ENCODE measurements at regions of chr15 and their contacts with region 1.

Region 1: DNA sequence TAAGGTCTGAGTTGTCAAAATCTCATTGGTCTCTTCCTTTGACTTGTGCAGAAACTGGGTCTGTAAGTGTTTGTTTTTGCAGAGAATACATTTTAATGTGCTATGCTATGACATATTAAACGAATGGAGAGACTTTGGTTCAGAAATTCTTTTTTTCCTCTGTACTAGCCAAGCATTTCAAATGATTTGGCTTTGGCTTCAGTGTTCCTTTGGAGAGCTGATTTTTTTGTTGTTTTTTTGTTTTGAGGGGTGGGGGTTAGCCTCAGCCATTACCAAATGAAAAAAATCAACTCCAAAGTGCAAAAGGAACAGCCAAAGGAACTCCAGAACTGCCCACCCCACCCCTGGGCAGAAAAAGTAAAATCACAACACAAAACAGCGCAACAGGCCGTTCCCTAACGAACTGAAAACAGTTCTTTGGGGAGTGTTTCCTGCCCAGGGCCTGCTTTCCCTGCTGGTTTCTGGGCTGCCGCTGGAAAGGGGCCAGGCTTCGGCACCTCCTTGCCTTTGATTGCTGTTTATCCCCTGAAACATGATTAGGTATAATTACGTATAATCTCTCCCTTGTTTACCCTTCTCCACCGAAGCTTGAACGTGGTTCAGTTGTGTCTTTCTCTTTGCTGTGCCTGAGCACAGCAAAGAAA is 57.6 kb upstream of the NEO1 start:
- DNase-seq: peak in 1 of 2 donors; percentile 16
- ATAC-seq: peak in 2 of 8 donors; percentile 24 to 77
- H3K4me3 ChIP-seq: peak overlapping the region in 2 of 10 donors; percentile 15 to 20
- H3K27ac ChIP-seq: peak overlapping the region in 5 of 10 donors; percentile 13 to 43 (median 32)
- H3K4me1 ChIP-seq: peaks cover 0 to 27% (median 9%) of the 10 kb centered on the region in 9 donors
- H3K27me3 ChIP-seq: peaks cover 0 to 17% (median 0%) of the 10 kb centered on the region in 7 donors
- CTCF ChIP-seq: no peak

Region 2: DNA sequence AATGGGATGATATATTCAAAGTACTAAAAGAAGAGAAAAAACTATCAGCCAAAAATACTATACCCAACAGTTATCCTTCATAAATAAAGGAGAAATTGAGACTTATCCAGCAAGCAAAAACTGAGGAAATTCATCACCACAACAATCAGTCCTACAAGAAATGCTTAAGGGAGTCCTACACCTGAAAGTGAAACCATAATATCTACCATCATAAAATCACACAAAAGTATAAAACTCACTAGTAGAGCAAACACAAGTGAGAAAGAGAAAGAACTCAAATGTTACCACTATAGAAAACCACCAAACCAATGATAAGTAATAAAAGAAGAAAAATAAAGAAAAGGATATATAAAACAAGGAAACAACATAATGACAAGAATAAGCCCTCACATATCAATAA is 46.0 kb before region 1 on chr15:
- intact Hi-C with region 1: loop called in 1 of 10 experiments (anchors 5 kb)
- DNase-seq: no peak
- ATAC-seq: no peak
- H3K4me3 ChIP-seq: no peak overlapping the region
- H3K27ac ChIP-seq: no peak overlapping the region
- H3K4me1 ChIP-seq: no peaks in the 10 kb centered on the region
- H3K27me3 ChIP-seq: peaks cover 0 to 11% (median 0%) of the 10 kb centered on the region in 7 donors
- CTCF ChIP-seq: no peak

Measured in heart right ventricle (tissue), 16 donors.